ENCODE measurements at regions of chr1 and their contacts with region 1.

Region 1: GRCh38 chr1:207404849-207405525 is 49.1 kb upstream of the CR2 start:
- DNase-seq: no peak
- H3K4me3 Mint-ChIP-seq: no peak overlapping the region
- H3K27ac Mint-ChIP-seq: no peak overlapping the region
- H3K4me1 Mint-ChIP-seq: peaks cover 18% of the 10 kb centered on the region
- H3K27me3 Mint-ChIP-seq: no peaks in the 10 kb centered on the region

Region 2: DNA sequence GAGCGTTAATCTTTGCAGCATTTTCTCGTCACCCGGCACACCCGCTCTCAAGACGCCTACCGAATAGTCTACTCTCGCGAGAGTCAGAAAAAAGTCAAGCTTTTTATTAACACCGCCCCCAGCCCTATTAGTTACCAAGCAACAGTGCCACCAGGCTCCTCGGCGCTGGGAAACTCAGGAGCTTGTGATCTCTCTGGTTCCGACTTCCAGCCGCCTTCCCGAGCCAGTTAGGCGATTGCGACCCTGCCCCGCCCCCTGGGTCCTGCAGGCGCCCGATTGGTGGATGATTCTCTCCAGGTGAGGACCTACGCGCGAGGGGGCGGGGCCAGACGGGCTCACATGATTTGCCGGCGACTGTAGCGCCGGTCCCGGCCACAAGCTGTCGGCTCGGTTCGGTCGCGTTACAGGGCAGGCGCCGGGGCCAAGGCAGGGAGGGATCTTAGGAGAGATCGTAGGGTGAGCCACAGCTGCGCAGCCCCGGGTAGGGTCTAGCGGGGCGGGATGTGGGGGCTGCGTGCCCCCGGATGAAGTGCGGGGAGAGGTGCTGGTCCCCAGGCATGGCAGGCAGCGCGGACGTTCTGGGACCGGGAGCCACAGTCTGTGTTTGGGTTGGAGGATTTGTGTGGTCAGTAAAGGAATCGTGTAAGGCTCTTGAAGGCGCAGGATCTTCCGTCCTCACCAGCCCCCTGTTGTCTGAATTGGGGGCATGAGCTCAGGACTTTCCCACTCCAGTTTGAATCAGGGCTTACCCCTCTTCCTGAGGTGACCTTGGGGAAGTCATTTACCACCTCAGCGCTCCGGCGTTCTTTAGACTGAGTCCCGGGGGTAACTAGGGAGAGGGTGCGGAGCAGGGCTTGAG is 351.8 kb before region 1 on chr1 and contains the start of gene PFKFB2:
- intact Hi-C with region 1: loop called (anchors 10 kb)
- DNase-seq: peak; percentile 90
- H3K4me3 Mint-ChIP-seq: peak within 1 kb of the TSS; percentile 91
- H3K27ac Mint-ChIP-seq: peak within 1 kb of the TSS; percentile 75
- H3K4me1 Mint-ChIP-seq: peaks cover 30% of the 10 kb centered on the region
- H3K27me3 Mint-ChIP-seq: peaks cover 7% of the 10 kb centered on the region
- total RNA-seq, gene PFKFB2: 1.9 and 2.2 TPM in 2 replicates

Region 3: DNA sequence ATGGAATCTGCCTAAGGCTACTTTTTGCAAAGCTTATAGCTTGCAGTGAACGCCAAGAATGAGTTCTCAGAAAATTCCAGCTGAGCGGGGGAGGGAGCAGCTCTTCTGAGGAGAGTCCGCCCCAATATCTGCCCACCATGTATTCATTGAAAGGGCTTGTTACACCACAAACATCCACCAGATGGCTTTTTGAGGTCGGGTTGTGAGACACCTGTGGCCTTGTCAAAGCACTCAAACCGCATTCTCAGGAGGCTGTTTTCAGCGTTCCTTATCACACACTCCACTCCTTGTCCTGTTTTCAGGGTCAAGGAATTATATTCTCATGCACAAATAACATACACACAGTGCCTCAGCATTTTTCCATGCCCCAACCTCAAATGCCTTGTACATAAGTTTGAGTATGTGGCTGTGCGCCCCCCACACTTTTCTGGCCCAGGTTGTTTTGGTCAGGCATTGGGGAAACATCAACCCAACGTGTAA is 320.2 kb before region 1 on chr1:
- intact Hi-C with region 1: loop called (anchors 1 kb)
- DNase-seq: peak; percentile 26
- H3K4me3 Mint-ChIP-seq: no peak overlapping the region
- H3K27ac Mint-ChIP-seq: no peak overlapping the region
- H3K4me1 Mint-ChIP-seq: peaks cover 27% of the 10 kb centered on the region
- H3K27me3 Mint-ChIP-seq: peaks cover 31% of the 10 kb centered on the region

Region 4: DNA sequence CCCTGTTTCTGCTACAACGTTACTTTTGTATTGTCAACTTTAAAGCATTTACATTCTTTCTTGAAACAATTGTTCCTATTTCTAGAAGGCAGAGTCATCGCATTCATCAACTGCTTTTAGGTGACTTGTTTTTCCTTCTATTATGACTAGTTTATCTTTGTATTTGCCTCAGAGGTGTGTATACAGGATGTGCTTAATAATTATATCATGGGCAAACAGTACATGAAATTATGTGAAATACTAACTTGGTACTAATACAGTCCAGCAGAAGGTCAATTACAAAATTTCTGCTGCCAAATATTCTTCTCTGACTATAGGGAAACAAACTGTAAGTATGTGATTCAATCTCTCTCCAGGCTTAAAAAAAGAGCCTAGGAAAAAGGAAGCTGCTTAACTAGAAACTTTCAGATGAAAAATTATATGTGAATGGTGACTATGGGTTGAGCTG is 199.3 kb before region 1 on chr1:
- intact Hi-C with region 1: no loop called
- DNase-seq: no peak
- H3K4me3 Mint-ChIP-seq: no peak overlapping the region
- H3K27ac Mint-ChIP-seq: no peak overlapping the region
- H3K4me1 Mint-ChIP-seq: peaks cover 2% of the 10 kb centered on the region
- H3K27me3 Mint-ChIP-seq: no peaks in the 10 kb centered on the region

Region 5: DNA sequence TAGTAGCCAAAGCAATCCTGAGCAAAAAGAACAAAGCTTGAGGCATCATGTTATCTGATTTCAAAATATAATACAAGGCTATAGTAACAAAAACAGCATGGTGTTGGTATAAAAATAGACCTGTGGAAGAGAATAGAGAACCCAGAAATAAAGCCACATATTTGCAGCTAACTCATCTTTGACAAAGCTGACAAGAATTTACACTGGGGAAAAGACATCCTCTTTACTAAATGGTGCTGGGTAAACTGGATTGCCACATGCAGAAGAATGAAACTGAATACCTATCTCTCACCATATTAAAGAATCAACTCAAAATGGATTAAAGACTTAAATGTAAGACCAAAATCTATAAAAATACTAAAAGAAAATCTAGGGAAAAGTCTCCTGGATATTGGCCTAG is 143.0 kb before region 1 on chr1:
- intact Hi-C with region 1: loop called (anchors 10 kb)
- DNase-seq: no peak
- H3K4me3 Mint-ChIP-seq: no peak overlapping the region
- H3K27ac Mint-ChIP-seq: no peak overlapping the region
- H3K4me1 Mint-ChIP-seq: no peaks in the 10 kb centered on the region
- H3K27me3 Mint-ChIP-seq: peaks cover 5% of the 10 kb centered on the region

Region 6: DNA sequence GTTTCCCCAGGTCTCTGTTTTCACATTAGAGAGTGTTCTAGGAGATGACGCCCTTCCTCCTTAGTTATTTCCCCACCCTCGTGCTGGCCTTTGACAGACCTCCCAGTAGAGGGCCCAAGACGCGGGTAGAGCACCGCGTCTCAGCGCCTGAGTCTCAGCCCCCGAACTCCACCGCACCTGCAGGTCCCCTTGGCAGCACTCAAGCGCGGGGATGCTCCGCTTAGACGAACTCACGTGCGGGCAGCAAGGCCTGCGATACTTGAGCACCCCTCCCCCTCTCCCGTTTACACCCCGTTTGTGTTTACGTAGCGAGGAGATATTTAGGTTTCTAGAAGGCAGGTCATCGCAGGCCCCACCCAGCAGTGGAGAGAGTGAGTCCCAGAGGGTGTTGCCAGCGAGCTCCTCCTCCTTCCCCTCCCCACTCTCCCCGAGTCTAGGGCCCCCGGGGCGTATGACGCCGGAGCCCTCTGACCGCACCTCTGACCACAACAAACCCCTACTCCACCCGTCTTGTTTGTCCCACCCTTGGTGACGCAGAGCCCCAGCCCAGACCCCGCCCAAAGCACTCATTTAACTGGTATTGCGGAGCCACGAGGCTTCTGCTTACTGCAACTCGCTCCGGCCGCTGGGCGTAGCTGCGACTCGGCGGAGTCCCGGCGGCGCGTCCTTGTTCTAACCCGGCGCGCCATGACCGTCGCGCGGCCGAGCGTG is 83.8 kb before region 1 on chr1 and contains the start of gene CD55:
- intact Hi-C with region 1: loop called (anchors 1 kb)
- DNase-seq: peak; percentile 99
- H3K4me3 Mint-ChIP-seq: peak within 1 kb of the TSS; percentile 93
- H3K27ac Mint-ChIP-seq: peak within 1 kb of the TSS; percentile 99
- H3K4me1 Mint-ChIP-seq: peaks cover 33% of the 10 kb centered on the region
- H3K27me3 Mint-ChIP-seq: no peaks in the 10 kb centered on the region
- total RNA-seq, gene CD55: 132 and 135 TPM in 2 replicates

Region 7: GRCh38 chr1:207374887-207375286 is 30.1 kb before region 1 on chr1:
- intact Hi-C with region 1: no loop called
- DNase-seq: no peak
- H3K4me3 Mint-ChIP-seq: no peak overlapping the region
- H3K27ac Mint-ChIP-seq: no peak overlapping the region
- H3K4me1 Mint-ChIP-seq: no peaks in the 10 kb centered on the region
- H3K27me3 Mint-ChIP-seq: peaks cover 2% of the 10 kb centered on the region

Region 8: DNA sequence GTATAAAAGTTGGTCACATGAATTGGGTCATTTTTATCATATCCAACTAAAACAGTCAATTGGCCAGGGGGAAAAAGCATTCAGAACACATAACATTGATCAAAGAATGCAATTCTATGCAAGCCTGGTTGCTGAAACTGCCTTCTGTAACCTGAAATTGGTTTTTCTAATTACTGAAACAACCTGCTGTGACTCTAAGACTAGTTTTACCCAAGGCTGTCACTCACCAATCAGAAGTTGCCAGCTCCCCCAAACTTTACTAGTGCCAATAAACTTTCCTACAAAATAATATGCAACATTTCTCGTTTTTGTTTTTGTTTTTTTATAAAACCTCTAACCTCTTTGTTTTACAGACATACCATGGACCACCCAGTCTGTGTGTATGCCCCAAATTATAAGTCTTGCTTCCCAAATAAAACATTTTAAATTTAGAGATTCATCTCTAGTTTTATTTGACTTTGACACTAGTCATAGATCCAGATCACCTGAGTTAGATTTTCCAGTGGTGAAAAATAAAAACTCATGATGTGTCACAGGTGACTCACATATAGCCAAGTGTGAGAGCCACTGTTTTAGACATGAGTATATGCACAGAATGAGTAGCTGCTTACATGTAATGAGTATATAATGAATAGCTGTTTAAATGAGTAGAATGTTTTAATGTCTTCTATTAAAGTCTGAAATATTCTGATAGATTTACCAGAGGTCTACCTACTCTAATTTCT is 15.1 kb before region 1 on chr1:
- intact Hi-C with region 1: loop called (anchors 2 kb)
- DNase-seq: no peak
- H3K4me3 Mint-ChIP-seq: no peak overlapping the region
- H3K27ac Mint-ChIP-seq: peak overlapping the region; percentile 82
- H3K4me1 Mint-ChIP-seq: peaks cover 8% of the 10 kb centered on the region
- H3K27me3 Mint-ChIP-seq: no peaks in the 10 kb centered on the region

Region 9: DNA sequence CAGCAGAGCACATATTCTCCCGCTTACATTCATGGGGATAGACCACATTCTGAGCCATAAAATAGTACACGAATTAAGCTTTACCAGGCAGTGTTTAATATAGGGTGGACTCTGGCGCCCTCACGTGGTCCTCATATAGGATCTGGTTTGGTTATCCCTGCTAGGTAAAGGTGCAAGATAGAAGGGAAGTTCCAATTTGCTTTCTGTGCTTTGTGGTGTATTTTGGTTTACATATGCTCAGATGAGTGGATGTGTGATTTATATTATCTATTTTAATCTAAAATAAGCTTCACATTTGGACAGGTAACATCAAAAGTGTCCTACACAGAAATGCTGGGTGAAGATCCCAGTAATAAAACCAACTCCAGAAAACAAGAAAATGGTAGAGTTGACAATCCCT is 94.6 kb after region 1 on chr1:
- intact Hi-C with region 1: loop called (anchors 1 kb)
- DNase-seq: peak; percentile 37
- H3K4me3 Mint-ChIP-seq: no peak overlapping the region
- H3K27ac Mint-ChIP-seq: peak overlapping the region; percentile 3
- H3K4me1 Mint-ChIP-seq: peaks cover 21% of the 10 kb centered on the region
- H3K27me3 Mint-ChIP-seq: peaks cover 56% of the 10 kb centered on the region

Measured in activated T-helper 2 cell treated with anti-CD3 and anti-CD28 coated beads, Interferon-gamma antibody, Interleukin-2, Interleukin-4, amounts not matched to agents 10 μg/mL and 5 μg/mL and 100 μg/mL, durations not matched to agents 14 hours and 24 hours and 36 hours (primary cell).